ENCODE measurements at regions of chr14 and their contacts with region 1.

Region 1: GRCh38 chr14:64387694-64388532 is at the start of gene MTHFD1:
- DNase-seq: peak; percentile 99
- ATAC-seq: peak; percentile 84
- H3K4me3 ChIP-seq: peak within 1 kb of the TSS; percentile 80
- H3K27ac ChIP-seq: peak within 1 kb of the TSS; percentile 48
- H3K4me1 ChIP-seq: peaks cover 11% of the 10 kb centered on the region; the same call in 1 of the 2 replicates
- H3K27me3 ChIP-seq: no peaks in the 10 kb centered on the region
- CTCF ChIP-seq: no peak
- total RNA-seq, gene MTHFD1: 89.3 and 103 TPM in 2 replicates

Region 2: GRCh38 chr14:64465191-64465822 is 77.4 kb after region 1 on chr14 and contains the start of gene AKAP5:
- CTCF ChIA-PET with region 1: no interaction called
- POLR2A ChIA-PET with region 1: interaction called, 3 read pairs
- intact Hi-C with region 1: loop called (anchors 5 kb)
- DNase-seq: peak; percentile 53
- ATAC-seq: peak; percentile 89
- H3K4me3 ChIP-seq: peak within 1 kb of the TSS; percentile 75
- H3K27ac ChIP-seq: no peak within 1 kb of the TSS
- H3K4me1 ChIP-seq: peaks cover 6% of the 10 kb centered on the region; the same call in 1 of the 2 replicates
- H3K27me3 ChIP-seq: no peaks in the 10 kb centered on the region
- CTCF ChIP-seq: no peak
- total RNA-seq, gene AKAP5: 0.58 and 0.86 TPM in 2 replicates

Region 3: DNA sequence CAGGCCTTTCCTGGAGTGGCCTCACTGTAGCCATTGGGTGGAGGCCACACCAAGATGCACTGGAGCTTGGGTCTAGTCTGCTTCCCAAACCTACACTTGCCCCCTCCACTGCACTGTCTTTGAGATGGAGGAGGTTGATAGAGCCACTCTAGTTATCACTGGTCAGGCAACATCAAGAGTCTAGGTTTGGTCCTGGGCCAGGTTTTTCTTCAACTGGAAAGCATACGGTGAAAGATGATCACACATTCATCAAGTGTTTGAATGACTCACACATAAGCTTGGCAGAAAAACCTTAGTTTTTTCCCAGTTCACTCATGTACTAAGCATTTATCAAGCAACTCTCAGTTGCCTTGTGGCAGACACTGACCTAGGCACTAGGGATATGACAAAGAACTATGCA is 400.8 kb after region 1 on chr14:
- CTCF ChIA-PET with region 1: no interaction called
- POLR2A ChIA-PET with region 1: no interaction called
- intact Hi-C with region 1: no loop called
- DNase-seq: peak; percentile 94
- ATAC-seq: peak; percentile 88
- H3K4me3 ChIP-seq: no peak overlapping the region
- H3K27ac ChIP-seq: no peak overlapping the region
- H3K4me1 ChIP-seq: peaks cover 9% of the 10 kb centered on the region
- H3K27me3 ChIP-seq: no peaks in the 10 kb centered on the region
- CTCF ChIP-seq: no peak